GM18951 (cell line): ENCODE measurements at regions of chr14 and their contacts with region 1.

Region 1: GRCh38 chr14:75126679-75127473 is at the start of gene NEK9:
- POLR2A ChIP-seq: peak; percentile 97

Region 2: GRCh38 chr14:74754157-74754556 is 372.7 kb before region 1 on chr14:
- in situ Hi-C with region 1: no loop called
- POLR2A ChIP-seq: no peak

Region 3: DNA sequence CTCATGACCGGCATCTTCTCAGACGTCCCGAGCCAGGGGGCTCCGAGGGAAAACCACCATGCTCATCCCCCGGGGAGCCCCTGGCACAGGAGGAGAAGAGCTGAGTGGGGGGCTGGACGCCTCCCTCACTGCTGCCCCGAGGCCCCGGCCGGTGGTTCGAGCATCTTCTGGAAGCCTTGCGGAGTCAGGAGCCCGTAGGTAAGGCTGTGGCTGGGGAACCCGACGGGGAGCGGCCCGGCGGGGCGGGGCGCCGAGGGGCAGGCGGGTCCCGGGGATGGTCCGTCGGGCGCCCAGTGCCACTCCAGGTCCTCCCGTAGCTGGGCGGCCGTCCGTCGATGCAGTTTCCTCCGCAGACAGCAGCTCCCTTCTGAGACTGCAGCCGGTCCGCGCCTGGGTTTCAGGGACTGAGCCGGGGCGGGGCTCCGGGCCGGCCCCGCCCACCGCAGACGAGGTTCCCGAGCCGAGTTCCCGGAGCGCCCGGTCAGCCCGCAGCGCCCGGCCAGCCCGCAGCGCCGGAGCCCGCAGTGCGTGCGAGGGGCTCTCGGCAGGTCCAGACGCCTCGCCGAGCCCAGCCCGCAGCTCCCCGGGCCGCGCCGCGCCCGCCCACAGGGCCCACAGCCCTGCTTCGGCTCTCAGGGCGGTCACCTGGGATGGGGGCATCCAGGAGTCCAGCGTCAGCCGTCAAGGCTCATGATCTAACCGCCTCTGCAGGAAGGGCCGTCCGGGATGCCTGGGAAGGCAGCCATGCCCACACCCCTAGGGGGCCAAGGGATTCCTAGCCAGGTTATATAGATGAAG is 171.4 kb before region 1 on chr14 and contains the start of gene PGF:
- in situ Hi-C with region 1: no loop called
- POLR2A ChIP-seq: peak; percentile 18

Region 4: GRCh38 chr14:75022655-75023054 is 104.2 kb before region 1 on chr14:
- in situ Hi-C with region 1: no loop called
- POLR2A ChIP-seq: no peak

Region 5: DNA sequence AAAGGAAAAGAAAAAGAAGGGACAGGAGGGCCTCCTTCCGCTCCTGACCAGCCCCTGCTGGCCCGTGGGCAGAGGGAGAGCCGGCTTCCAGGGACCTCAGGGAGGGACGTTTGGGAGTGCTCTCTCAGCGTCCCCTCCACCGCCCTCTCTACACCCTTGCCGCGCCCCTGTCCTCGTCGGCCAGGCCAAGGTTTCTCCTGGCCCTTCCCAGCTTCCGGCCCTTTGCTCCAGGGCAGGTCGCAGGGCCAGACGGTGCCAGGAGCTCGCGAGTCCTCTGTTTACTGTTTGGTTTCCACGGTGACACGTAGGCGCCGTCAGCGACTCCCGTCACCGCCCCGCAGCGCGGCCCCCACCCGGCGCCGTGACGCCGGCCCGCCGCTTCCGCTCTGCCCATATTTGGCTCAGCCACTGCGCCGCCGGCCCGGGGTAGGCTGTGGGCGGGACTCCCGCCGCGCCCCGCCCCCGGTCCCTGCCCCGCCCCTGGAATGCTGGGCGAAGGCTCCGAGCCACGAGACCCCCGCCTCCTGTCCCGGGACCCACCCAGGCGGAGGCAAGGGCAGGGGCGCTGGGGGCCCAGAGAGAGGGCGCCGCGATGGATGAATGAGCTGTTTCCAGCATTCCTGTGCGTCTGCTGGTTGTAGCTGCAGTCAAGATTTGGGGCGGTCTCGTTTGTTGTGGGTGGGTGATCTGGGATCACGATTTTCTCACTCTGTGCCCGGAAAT is 167.2 kb after region 1 on chr14:
- in situ Hi-C with region 1: loop called (anchors 5 kb)
- POLR2A ChIP-seq: no peak

Region 6: GRCh38 chr14:75427482-75428229 is 300.8 kb after region 1 on chr14 and contains the start of gene JDP2:
- in situ Hi-C with region 1: no loop called
- POLR2A ChIP-seq: peak; percentile 53

Region 7: DNA sequence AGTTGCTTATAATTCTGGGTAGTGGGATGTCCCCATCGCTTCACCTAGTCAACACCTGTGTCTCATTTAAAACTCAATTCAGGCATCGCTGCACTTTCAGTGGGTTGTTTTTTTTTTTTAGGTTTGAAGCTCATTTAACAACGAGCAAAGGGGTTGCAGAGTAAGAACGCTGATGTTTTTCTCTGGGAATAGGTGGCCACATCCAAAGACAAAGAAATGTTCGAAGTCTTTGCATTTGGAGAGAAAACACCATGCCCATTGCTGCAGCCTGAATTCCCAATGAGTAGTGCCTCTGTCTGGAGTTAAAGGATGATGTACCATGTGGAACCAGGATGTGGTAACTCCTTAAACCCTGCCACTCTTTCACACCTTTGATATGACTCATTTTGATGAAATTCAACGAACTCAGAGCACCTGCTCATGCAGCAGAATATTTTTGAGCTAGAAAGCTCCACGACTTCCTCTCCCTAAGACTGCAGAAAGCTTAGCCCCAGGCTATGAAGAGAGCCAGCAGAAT is 360.3 kb after region 1 on chr14:
- in situ Hi-C with region 1: loop called (anchors 25 kb)
- POLR2A ChIP-seq: no peak

Region 8: DNA sequence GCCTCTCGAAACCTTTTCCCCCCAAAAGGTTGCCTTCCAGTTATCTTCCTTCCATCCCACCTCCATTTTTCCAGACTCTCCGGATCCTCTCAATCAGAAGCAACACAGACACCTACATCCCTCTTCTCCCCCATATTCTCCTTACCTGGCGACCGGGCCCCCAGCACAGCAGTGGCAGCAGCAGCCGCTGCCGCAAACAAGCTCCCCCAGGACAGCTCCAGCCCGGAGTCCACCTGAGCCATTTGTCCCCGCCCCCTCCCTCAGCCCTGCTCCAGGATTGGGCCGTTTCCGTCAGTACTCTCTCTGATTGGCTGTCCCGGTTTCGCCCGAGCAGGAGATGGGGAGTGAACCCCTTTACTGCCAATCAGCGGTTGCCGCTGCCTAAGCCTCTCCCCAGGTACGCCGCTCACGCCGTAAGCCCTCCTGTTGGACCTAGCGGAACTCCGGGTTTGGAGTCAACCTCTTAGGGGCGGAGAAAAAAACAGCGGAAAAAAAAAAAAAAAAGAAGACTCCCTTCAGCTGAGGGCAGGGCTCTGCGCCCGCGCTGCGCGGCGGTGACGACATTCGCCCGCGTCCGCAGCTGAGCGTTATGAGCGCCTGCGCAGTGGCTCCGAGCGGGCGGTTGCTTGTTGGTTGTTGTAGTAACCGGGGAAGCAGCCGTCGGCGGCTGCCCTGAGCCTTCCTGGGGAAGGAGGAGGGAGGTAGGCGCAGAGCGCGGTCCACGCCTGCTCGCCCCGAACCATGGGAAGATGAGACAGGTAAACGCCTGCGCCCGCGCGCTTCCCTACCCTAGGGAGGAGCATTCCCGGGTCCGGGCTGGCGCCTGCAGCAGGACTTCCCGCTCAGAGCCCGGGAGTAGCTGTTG is 534.0 kb after region 1 on chr14 and contains the starts of genes ERG28 and TTLL5:
- in situ Hi-C with region 1: loop called (anchors 25 kb)
- POLR2A ChIP-seq: peak; percentile 90